Breast epithelium (tissue), 4 donors: ENCODE measurements at regions of chr19 and their contacts with region 1.

Region 1: DNA sequence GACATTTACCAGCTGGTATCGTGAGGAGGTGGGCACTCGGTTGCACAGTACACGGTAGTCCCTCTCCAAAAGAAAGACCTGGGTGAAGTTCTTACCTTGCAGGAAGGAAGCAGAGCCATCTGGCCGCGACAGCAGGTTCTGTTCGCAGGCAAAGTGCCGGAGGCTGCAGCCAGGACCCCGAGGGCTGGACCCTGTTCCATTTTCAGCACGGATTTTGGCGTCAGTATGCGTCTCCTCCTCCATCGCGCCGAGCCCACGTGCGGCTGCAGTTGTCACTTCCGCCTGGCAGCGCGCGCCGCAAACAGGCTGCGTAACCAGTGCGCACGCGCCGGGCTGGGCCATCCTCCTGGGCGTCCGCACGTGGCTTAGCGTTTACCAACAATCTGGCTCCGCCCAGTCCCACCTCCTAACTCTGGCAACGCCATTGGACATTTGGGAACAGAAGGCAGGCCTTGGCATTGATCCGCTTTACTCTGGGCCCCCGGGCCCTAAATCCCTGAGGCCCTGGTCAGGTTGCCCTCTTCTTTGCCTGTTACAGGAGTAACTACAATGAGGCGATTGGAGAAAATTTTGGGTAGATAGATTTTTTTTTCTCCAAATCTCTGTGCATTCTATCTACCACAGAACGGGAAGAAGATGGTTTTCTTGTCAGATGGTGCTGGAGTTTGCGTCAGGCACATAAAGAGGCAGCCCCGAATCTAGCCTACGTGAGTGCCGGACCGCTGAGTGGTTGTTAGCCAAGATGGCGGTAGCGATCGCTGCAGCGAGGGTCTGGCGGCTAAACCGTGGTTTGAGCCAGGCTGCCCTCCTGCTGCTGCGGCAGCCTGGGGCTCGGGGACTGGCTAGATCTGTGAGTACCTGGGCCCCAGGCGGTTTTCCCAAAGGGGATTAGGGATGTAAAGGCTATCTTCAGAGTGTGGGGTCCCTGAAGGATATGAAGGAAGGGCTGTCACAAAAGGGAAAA is at the starts of genes BCKDHA and EXOSC5:
- DNase-seq: peak; percentile 99
- H3K4me3 ChIP-seq: peak within 1 kb of the TSS; percentile 88 to 99 (median 95)
- H3K27ac ChIP-seq: peak within 1 kb of the TSS; percentile 89
- H3K4me1 ChIP-seq: peaks cover 0 to 9% of the 10 kb centered on the region in 2 donors
- H3K27me3 ChIP-seq: no peaks in the 10 kb centered on the region
- CTCF ChIP-seq: peak; percentile 11 to 18 (median 17)
- POLR2A ChIP-seq: no peak
- total RNA-seq, gene BCKDHA: 40.3 to 54.6 (median 53.1) TPM
- total RNA-seq, gene EXOSC5: 18.2 to 20.6 (median 18.7) TPM

Region 2: GRCh38 chr19:41339936-41340335 is 57.4 kb before region 1 on chr19:
- intact Hi-C with region 1: no loop called
- DNase-seq: no peak
- H3K4me3 ChIP-seq: no peak overlapping the region
- H3K27ac ChIP-seq: no peak overlapping the region
- H3K4me1 ChIP-seq: no peaks in the 10 kb centered on the region
- H3K27me3 ChIP-seq: no peaks in the 10 kb centered on the region
- CTCF ChIP-seq: no peak
- POLR2A ChIP-seq: no peak

Region 3: GRCh38 chr19:41351339-41352245 is 45.8 kb before region 1 on chr19:
- intact Hi-C with region 1: loop called (anchors 2 kb)
- DNase-seq: no peak
- H3K4me3 ChIP-seq: peak overlapping the region; percentile 82 to 97 (median 82)
- H3K27ac ChIP-seq: peak overlapping the region; percentile 78 to 92
- H3K4me1 ChIP-seq: peaks cover 0 to 6% of the 10 kb centered on the region in 2 donors
- H3K27me3 ChIP-seq: no peaks in the 10 kb centered on the region
- CTCF ChIP-seq: no peak
- POLR2A ChIP-seq: no peak